Activated CD4-positive, alpha-beta T cell treated with anti-CD3 and anti-CD28 coated beads, Interleukin-2, amount 10 ng/mL, durations not matched to agents 24 days and 14 days (primary cell): ENCODE measurements at regions of chr9 and their contacts with region 1.

Region 1: GRCh38 chr9:68584189-68585033 is 43.7 kb upstream of the TMEM252 start:
- DNase-seq: peak; percentile 94
- H3K4me3 Mint-ChIP-seq: no peak overlapping the region
- H3K27ac Mint-ChIP-seq: no peak overlapping the region
- H3K4me1 Mint-ChIP-seq: peaks cover 13% of the 10 kb centered on the region
- H3K27me3 Mint-ChIP-seq: peaks cover 2% of the 10 kb centered on the region

Region 2: DNA sequence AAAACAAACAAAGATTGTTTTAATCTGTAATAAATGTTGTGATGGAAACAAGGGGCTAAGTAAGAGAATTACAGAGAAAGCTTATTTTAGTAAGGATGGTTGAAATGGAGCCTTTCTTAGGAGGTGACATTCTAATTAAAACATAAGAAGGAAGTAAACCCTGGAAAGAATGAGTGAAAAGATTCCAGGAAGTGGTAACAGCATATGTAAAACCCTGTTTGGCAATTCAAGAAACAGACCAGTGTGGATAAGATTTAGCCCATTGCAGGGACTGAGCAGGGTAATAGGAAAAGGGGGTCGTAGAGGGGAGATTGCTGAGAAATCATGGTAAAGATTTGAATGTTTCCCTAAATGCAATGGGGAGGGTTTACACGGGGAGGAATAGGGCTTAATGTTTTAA is 99.0 kb after region 1 on chr9:
- intact Hi-C with region 1: loop called (anchors 1 kb)
- DNase-seq: no peak
- H3K4me3 Mint-ChIP-seq: peak overlapping the region; percentile 30
- H3K27ac Mint-ChIP-seq: no peak overlapping the region
- H3K4me1 Mint-ChIP-seq: peaks cover 22% of the 10 kb centered on the region
- H3K27me3 Mint-ChIP-seq: peaks cover 1% of the 10 kb centered on the region

Region 3: GRCh38 chr9:68762570-68762969 is 178.2 kb after region 1 on chr9:
- intact Hi-C with region 1: loop called (anchors 5 kb)
- DNase-seq: no peak
- H3K4me3 Mint-ChIP-seq: no peak overlapping the region
- H3K27ac Mint-ChIP-seq: no peak overlapping the region
- H3K4me1 Mint-ChIP-seq: peaks cover 4% of the 10 kb centered on the region
- H3K27me3 Mint-ChIP-seq: peaks cover 19% of the 10 kb centered on the region

Region 4: DNA sequence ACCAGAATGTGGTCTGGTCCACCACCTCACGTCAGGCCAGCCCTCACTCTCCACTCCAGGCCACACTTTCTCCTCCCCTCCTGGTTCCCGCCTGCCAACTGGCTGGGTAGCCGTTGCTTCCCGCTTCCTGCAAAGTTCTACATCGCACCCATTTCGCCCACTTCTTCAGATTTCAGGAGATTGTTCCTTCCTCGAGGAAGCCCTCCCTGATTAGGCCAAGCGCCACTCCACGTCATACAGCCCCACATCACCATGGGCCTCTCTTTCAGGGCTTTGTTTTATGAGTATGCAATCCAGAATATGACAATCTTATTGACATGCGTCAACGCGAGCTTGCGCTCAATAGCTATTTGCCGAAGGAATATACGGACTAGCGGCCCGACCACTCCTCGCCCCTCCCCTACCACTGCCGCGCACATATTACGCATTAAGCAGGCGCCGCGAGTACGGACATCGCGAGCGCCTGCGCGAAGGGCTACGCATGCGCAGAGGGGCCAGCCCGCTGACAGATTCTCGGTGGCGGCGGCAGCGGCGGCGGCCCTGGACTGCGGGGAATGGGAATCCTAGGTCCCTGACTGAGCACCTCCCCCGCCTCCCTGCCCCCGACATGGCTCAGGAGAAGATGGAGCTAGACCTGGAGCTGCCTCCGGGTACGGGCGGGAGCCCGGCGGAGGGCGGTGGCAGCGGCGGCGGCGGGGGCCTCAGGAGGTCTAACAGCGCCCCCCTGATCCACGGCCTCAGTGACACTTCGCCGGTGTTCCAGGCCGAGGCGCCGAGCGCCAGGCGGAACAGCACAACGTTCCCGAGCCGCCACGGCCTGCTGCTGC is 195.4 kb after region 1 on chr9:
- intact Hi-C with region 1: loop called (anchors 5 kb)
- DNase-seq: peak; percentile 98
- H3K4me3 Mint-ChIP-seq: no peak overlapping the region
- H3K27ac Mint-ChIP-seq: no peak overlapping the region
- H3K4me1 Mint-ChIP-seq: peaks cover 10% of the 10 kb centered on the region
- H3K27me3 Mint-ChIP-seq: peaks cover 4% of the 10 kb centered on the region

Region 5: DNA sequence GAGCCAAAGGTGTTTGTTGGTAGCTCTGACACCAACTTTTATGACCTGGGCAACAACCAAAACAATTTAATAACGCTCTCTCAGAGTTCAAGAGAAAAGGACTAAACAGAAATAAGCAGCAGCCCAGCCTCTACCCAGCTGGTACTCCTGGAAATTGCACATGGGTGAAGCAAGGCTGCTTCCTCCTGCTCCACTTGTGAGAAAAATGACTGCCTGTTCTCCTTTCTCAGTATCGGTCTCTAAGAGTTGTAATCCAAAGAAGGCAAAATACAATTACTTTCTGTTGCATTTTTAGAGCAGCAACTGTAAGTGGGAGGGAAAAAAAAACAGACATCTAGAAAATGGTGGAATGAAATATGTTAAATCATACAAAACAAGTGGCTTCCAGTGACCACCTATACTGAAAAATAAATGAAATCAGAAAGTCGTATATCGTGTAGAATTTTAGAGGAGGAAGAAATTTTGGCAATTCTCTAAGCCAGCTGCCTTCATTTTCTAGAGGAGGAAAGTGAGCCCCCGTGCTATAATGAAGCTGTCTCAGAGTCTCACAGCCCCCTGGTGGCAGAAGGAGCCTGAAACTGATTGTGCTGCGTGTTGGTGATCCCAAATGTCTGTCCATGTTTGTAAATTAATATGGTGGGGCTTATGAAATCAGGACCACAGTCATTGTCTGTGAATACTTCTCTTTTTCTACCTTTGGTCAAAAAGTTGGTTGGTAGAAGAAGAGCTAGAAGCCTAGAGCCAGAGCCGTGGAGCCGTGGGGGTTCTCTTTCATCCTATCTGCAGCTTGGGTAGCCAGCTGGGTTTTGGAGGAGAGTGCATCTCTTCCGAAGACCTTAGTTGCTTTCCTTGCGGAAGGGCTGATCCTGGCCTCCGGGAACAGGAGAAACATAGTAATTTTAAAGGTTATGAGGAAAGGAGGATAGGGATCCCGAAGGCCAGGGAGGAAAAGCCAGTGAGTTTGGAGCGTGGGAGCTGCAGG is 260.5 kb after region 1 on chr9:
- intact Hi-C with region 1: loop called (anchors 10 kb)
- DNase-seq: peak; percentile 62
- H3K4me3 Mint-ChIP-seq: no peak overlapping the region
- H3K27ac Mint-ChIP-seq: peak overlapping the region; percentile 42
- H3K4me1 Mint-ChIP-seq: peaks cover 11% of the 10 kb centered on the region
- H3K27me3 Mint-ChIP-seq: no peaks in the 10 kb centered on the region

Region 6: GRCh38 chr9:68949271-68950000 is 365.0 kb after region 1 on chr9:
- intact Hi-C with region 1: loop called (anchors 1 kb)
- DNase-seq: peak; percentile 79
- H3K4me3 Mint-ChIP-seq: peak overlapping the region; percentile 28
- H3K27ac Mint-ChIP-seq: peak overlapping the region; percentile 81
- H3K4me1 Mint-ChIP-seq: peaks cover 59% of the 10 kb centered on the region
- H3K27me3 Mint-ChIP-seq: no peaks in the 10 kb centered on the region

Region 7: DNA sequence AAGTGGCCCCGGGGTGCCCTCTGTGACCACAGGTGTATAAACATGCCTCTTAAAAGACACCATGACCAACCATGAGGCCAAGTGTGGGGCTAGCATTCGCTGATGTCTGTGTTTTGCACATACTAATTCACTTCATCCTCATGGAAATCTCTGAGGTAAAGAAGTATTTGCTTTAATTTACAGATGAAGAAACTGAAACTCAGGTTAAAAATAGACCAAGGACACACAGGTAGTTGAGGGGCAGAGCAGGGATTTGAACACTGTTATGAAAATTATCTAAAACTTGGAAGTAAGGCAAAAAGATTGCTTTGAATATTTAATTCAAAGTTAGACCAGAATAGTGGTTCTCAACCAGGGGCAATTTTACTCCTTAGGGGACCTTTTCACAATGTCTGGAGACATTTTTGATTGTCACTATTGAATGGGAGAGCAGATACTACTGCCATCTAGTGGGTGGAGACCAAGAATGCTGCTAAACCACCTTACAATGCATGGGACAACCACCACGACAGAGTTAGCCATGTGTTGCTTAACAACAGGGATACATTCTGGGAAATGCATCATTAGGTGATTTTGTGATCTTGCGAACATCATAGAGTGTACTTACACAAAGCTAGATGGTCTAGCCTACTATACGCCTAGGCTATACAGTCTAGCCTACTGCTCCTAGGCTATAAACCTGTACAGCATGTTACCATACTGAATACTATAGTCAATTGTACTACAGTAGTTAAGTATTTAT is 443.1 kb after region 1 on chr9:
- intact Hi-C with region 1: loop called (anchors 1 kb)
- DNase-seq: peak; percentile 84
- H3K4me3 Mint-ChIP-seq: no peak overlapping the region
- H3K27ac Mint-ChIP-seq: no peak overlapping the region
- H3K4me1 Mint-ChIP-seq: peaks cover 44% of the 10 kb centered on the region
- H3K27me3 Mint-ChIP-seq: peaks cover 2% of the 10 kb centered on the region